OCI-LY7 (cell line): ENCODE measurements at regions of chr10 and their contacts with region 1.

Region 1: DNA sequence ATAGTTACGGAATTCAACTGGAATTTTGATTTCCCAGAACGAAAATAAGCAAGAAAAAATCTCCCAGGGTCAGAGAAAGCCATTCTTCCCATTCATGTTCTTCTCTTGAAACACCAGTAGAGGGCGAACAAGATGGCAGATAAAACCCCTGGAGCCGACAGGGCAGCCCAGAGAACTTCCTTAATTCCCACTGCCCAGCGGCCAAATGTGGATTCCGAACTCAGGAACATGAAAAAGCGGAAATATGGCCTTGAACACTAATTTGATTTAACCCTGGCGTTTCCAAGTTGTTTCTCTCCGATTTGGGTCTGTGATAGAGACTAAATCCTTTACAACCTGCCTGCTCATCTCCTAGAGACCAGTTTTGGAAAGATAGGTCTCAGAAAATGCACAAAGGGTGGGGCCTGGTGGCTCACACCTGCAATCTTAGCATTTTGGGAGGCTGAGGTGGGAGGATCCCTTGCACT is 100.7 kb upstream of the WAC start:
- DNase-seq: peak; percentile 54
- H3K4me3 ChIP-seq: no peak overlapping the region
- H3K27ac ChIP-seq: no peak overlapping the region
- H3K4me1 ChIP-seq: no peaks in the 10 kb centered on the region
- CTCF ChIP-seq: peak; percentile 95

Region 2: DNA sequence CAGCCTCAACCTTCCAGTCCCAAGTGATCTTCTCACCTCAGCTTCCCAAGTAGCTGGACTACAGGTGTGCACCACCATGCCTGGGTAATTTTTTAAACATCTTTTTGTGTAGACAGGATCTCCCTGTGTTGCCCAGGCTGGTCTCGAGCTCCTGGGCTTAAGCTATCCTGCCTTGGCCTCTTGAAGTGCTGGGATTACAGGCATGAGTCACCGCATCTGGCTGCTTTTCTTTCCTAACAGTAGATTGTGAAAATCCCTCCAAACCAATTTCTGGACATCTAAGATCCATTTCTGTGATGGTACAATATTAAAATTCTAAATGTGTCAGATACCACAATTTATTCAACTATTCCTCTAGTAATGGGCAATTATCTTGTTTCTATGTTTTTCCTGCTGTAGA is 889.4 kb before region 1 on chr10:
- CTCF ChIA-PET with region 1: no interaction called
- POLR2A ChIA-PET with region 1: no interaction called
- intact Hi-C with region 1: no loop called
- DNase-seq: no peak
- H3K4me3 ChIP-seq: no peak overlapping the region
- H3K27ac ChIP-seq: no peak overlapping the region
- H3K4me1 ChIP-seq: no peaks in the 10 kb centered on the region
- CTCF ChIP-seq: no peak

Region 3: GRCh38 chr10:28387141-28387540 is 45.1 kb before region 1 on chr10:
- CTCF ChIA-PET with region 1: no interaction called
- POLR2A ChIA-PET with region 1: no interaction called
- intact Hi-C with region 1: no loop called
- DNase-seq: no peak
- H3K4me3 ChIP-seq: no peak overlapping the region
- H3K27ac ChIP-seq: no peak overlapping the region
- H3K4me1 ChIP-seq: no peaks in the 10 kb centered on the region
- CTCF ChIP-seq: no peak

Region 4: DNA sequence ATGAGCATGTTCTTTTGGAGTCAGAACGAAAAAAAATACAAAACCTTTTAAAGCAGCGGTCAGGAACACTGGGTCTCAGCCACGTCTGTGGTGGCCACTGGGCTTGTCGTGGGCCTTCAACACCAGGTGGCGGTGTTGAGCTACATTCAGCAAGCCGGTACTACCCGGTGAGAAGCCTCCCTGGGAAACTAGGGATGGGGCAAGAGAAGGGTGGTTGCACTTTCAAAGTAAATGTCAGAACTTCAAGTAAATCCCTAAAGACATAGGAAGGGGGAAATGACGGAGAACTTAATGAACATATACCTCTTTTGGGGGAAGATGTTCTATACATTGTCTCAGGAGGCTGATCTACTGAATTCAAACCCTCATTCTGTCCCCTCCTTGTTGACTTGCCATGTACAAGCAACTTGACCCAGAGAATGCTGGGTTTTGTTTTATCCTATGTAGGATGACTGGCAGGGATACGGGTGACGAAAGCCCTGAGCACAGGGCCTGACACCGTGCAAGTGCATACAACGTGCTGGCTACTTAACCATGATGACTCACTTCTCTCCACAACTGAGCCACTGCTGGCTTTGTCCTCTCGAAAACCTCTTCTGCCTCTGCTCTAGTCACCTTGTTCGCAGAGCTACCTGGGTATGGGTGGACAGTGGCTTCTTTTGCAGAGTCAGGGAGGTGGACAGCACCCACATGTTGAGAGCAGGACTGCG is 196.1 kb after region 1 on chr10:
- CTCF ChIA-PET with region 1: no interaction called
- POLR2A ChIA-PET with region 1: no interaction called
- intact Hi-C with region 1: loop called (anchors 10 kb)
- DNase-seq: peak; percentile 76
- H3K4me3 ChIP-seq: no peak overlapping the region
- H3K27ac ChIP-seq: no peak overlapping the region
- H3K4me1 ChIP-seq: no peaks in the 10 kb centered on the region
- CTCF ChIP-seq: peak; percentile 96